Dorsolateral prefrontal cortex (tissue), 120 donors: ENCODE measurements at regions of chrX and their contacts with region 1.

Region 1: GRCh38 chrX:153443481-153444332 is 2.1 kb downstream of the TREX2 start:
- DNase-seq: peak in 3 of 10 donors; percentile 15 to 53 (median 23)
- H3K4me3 ChIP-seq: no peak overlapping the region
- H3K27ac ChIP-seq: no peak overlapping the region
- H3K27me3 ChIP-seq: peaks cover 0 to 62% (median 5%) of the 10 kb centered on the region in 45 donors
- CTCF ChIP-seq: no peak

Region 2: GRCh38 chrX:153379971-153380581 is 63.6 kb before region 1 on chrX:
- intact Hi-C with region 1: loop called in 1 of 2 experiments (anchors 10 kb)
- DNase-seq: peak in 1 of 10 donors; percentile 23
- H3K4me3 ChIP-seq: no peak overlapping the region
- H3K27ac ChIP-seq: no peak overlapping the region
- H3K27me3 ChIP-seq: peaks cover 0 to 37% (median 4%) of the 10 kb centered on the region in 45 donors
- CTCF ChIP-seq: no peak